A549 (cell line): ENCODE measurements at regions of chr15 and their contacts with region 1.

Region 1: GRCh38 chr15:78241007-78241406 is 6.6 kb upstream of the ACSBG1 start:
- DNase-seq: peak; percentile 83 to 94
- ATAC-seq: peak; percentile 95 to 98
- H3K4me3 ChIP-seq: no peak overlapping the region
- H3K27ac ChIP-seq: no peak overlapping the region
- H3K4me1 ChIP-seq: no peaks in the 10 kb centered on the region
- CTCF ChIP-seq: peak; percentile 94
- EP300 ChIP-seq: no peak
- POLR2A ChIP-seq: no peak
- RAD21 ChIP-seq: peak; percentile 96 to 99

Region 2: DNA sequence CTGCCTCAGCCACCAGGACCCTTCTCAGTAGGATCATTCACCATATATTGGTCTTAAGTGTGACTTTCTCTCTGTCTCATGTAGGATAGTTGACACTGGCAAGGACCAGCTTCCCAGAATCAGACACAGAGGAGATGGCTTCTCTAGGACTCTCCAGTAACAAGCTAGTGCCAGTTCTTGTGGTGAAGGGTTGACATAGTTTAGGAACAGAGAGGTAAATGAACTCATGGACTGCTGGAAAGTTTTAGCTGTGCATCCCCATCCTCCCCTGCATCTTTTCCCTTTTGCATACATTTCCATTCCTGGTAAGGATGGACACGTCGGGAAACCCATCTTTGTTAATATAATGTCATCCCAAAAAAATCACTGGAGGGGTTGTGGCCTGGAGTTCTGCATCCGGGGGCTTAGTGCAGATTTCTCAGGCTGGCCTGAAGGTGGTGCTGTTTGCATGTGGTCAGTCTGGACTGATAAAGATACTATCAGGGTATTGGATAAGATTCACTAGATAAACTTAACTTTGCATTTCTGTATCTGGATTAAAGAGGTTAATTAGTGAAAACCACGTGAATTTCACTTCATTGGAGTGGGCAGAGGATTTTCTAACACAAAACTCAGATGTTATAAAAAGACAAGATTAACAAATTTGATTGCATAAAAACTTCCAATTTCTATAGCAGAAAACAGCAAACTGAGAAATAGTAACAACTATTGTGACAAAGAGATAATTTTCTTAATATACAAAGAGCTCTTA is 274.3 kb before region 1 on chr15:
- CTCF ChIA-PET with region 1: interaction called, 50 read pairs
- POLR2A ChIA-PET with region 1: no interaction called
- DNase-seq: peak; percentile 65 to 92
- ATAC-seq: peak; percentile 92 to 99
- H3K4me3 ChIP-seq: no peak overlapping the region
- H3K27ac ChIP-seq: no peak overlapping the region
- H3K4me1 ChIP-seq: no peaks in the 10 kb centered on the region
- CTCF ChIP-seq: peak; percentile 94
- EP300 ChIP-seq: no peak
- POLR2A ChIP-seq: no peak
- RAD21 ChIP-seq: peak; percentile 92 to 94

Region 3: DNA sequence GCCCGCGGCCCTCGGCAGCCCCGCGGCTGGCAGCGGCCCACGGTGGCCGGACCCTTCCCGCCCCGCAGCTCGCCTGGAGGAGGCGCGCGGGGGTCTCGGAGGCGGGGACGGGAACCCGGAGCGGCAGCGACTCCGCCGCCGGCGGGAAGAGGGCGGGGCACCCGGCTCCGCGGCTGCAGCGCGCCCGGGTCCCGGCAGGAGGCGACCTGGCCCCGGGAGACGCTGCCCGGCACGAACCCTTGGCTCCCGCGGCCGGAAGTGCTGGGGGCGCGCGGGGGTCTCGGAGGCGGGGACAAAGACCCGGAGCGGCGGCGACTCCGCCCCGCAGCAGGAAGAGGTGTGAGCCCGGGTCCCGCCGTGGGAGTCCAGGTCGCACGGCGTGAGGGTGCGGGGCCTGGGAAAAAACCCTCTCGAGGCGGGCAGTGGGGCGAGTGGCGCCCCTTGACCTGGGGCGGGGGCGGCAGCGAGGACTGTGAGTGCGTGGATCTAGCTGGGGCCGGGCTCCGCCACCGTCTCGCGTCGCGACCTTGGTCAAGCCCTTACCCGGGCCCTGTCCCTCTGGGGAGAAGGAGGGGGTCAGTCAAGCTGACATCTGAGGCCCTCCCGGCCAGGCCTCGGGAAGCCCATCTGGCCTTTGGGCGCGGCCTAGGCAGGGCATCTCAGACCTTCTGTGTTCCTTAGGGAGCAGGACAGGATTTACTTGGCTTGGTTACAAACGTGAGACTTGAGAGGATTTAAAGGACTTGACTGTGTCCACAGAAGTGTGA is 109.5 kb before region 1 on chr15 and contains the start of gene CIB2:
- CTCF ChIA-PET with region 1: interaction called, 116 read pairs
- POLR2A ChIA-PET with region 1: interaction called, 3 read pairs
- DNase-seq: peak; percentile 71 to 92
- ATAC-seq: peak; percentile 84 to 87
- H3K4me3 ChIP-seq: peak within 1 kb of the TSS; percentile 86
- H3K27ac ChIP-seq: peak within 1 kb of the TSS; percentile 91 to 94
- H3K4me1 ChIP-seq: peaks cover 38% of the 10 kb centered on the region
- CTCF ChIP-seq: peak; percentile 85
- EP300 ChIP-seq: no peak
- POLR2A ChIP-seq: peak; percentile 74
- RAD21 ChIP-seq: peak; percentile 61 to 81
- polyA plus RNA-seq, gene CIB2: 16.4 and 21.2 TPM in 2 replicates

Region 4: DNA sequence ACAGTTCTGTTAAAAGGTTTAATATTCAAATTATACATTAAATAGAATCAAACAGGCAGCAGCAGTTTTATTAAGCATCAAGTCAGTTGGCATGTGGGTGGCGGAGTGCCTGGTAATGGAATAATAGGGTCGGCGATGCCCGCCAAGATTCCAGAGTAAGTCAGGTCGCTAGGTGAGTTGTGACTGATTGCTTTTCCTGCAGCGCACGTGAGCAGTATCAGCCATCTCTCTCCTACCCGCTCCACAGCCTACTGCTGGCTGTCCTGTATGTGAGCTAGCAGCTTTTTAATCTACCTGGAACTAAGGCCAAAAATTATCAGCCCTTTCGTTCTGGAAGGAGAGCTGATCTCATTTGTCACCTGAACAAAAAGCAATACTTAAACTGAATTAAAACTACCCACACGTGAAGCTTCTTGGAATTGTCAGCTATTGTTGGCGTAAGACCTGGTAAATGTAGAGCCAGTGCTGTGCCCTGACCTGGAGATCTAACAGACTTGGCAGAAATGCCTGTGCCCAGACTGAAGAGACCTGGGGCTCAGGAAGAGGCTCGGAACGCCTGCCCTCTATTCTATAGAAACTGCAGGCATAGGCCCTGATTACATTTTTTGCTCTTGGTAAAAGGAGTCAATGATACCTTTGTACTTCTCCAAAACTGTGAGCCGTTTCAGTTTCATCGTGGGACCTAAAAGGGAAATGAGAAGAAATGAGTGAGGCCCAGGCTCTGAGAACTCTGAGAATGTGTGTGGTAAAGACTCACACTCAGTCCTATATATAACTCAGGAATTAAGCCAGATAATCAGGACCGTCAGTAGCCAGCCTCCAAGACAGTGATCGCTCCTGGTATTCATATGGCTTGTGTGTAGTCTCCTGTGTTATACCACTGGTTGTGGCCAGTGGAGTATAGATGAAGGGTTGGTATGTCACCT is 69.9 kb before region 1 on chr15:
- CTCF ChIA-PET with region 1: interaction called, 274 read pairs
- POLR2A ChIA-PET with region 1: no interaction called
- DNase-seq: no peak
- ATAC-seq: no peak
- H3K4me3 ChIP-seq: no peak overlapping the region
- H3K27ac ChIP-seq: no peak overlapping the region
- H3K4me1 ChIP-seq: no peaks in the 10 kb centered on the region
- CTCF ChIP-seq: no peak
- EP300 ChIP-seq: no peak
- POLR2A ChIP-seq: no peak
- RAD21 ChIP-seq: no peak

Region 5: GRCh38 chr15:78195735-78196201 is 45.2 kb before region 1 on chr15:
- CTCF ChIA-PET with region 1: interaction called, 184 read pairs
- POLR2A ChIA-PET with region 1: interaction called, 3 read pairs
- DNase-seq: peak; percentile 57 to 78
- ATAC-seq: peak; percentile 92 to 96
- H3K4me3 ChIP-seq: no peak overlapping the region
- H3K27ac ChIP-seq: no peak overlapping the region
- H3K4me1 ChIP-seq: no peaks in the 10 kb centered on the region
- CTCF ChIP-seq: peak; percentile 89
- EP300 ChIP-seq: no peak
- POLR2A ChIP-seq: no peak
- RAD21 ChIP-seq: peak; percentile 83 to 87

Region 6: GRCh38 chr15:78259232-78259631 is 18.2 kb after region 1 on chr15:
- CTCF ChIA-PET with region 1: interaction called, 78 read pairs
- POLR2A ChIA-PET with region 1: no interaction called
- DNase-seq: no peak
- ATAC-seq: no peak
- H3K4me3 ChIP-seq: no peak overlapping the region
- H3K27ac ChIP-seq: no peak overlapping the region
- H3K4me1 ChIP-seq: no peaks in the 10 kb centered on the region
- CTCF ChIP-seq: no peak
- EP300 ChIP-seq: no peak
- POLR2A ChIP-seq: no peak
- RAD21 ChIP-seq: no peak